ENCODE measurements at regions of chr1 and their contacts with region 1.

Region 1: DNA sequence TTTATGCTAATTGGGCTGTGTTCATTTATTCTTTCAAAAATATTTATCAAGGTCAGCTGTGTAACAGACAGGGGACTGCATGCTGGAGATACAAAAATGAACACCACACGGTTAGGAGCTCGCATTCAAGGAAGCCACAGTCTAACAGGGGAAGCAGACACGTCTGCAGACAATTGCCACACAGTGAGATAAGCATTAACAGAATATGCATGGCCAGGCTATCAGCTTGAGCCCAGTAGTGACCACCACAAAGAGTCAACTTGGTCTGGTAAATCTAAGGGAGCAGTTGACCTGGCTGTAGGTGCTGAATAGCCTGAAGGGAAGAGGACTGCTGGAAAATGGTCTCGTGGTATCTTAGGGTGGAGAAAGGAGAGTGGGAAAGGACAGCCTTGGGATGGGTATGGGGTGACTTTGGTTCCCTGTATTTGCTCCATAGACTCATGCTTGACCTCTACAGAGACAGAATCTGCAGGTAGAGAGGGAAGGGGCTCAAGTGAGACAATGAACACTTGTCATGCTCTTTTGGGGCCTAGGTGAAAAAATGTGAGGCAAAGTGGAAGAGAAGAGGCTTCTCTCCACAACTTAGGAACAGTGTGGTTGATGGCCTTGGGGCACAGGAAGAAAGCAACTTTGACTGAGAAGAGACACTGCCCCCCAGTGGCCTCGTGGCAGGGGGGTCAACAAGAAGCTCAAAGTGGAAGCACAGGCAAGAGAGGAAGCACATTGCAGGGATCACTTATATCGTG is 7.6 kb upstream of the NPL start:
- DNase-seq: peak; percentile 45 to 82 (median 62)
- ATAC-seq: peak; percentile 83
- H3K4me3 ChIP-seq: no peak overlapping the region
- H3K4me3 Mint-ChIP-seq: no peak overlapping the region
- H3K27ac ChIP-seq: no peak overlapping the region
- H3K27ac Mint-ChIP-seq: no peak overlapping the region
- H3K4me1 ChIP-seq: peaks cover 5% of the 10 kb centered on the region
- H3K4me1 Mint-ChIP-seq: peaks cover 4% of the 10 kb centered on the region
- H3K27me3 ChIP-seq: peaks cover 0 to 2% of the 10 kb centered on the region in 2 experiments
- H3K27me3 Mint-ChIP-seq: no peaks in the 10 kb centered on the region
- CTCF ChIP-seq: peak; percentile 58

Region 2: GRCh38 chr1:182446033-182446669 is 335.9 kb before region 1 on chr1:
- CTCF ChIA-PET with region 1: no interaction called
- POLR2A ChIA-PET with region 1: no interaction called
- intact Hi-C with region 1: loop called (anchors 2 kb)
- DNase-seq: peak in 4 of 14 experiments; percentile 30 to 62 (median 43)
- ATAC-seq: no peak
- H3K4me3 ChIP-seq: no peak overlapping the region
- H3K4me3 Mint-ChIP-seq: no peak overlapping the region
- H3K27ac ChIP-seq: no peak overlapping the region
- H3K27ac Mint-ChIP-seq: no peak overlapping the region
- H3K4me1 ChIP-seq: no peaks in the 10 kb centered on the region
- H3K4me1 Mint-ChIP-seq: no peaks in the 10 kb centered on the region
- H3K27me3 ChIP-seq: no peaks in the 10 kb centered on the region
- H3K27me3 Mint-ChIP-seq: peaks cover 10% of the 10 kb centered on the region
- CTCF ChIP-seq: peak; percentile 65

Region 3: GRCh38 chr1:182588500-182589452 is 193.2 kb before region 1 on chr1 and contains the start of gene RNASEL:
- CTCF ChIA-PET with region 1: interaction called, 370 read pairs
- POLR2A ChIA-PET with region 1: interaction called, 4 read pairs
- intact Hi-C with region 1: no loop called
- DNase-seq: peak; percentile 28 to 85 (median 54)
- ATAC-seq: peak; percentile 85
- H3K4me3 ChIP-seq: peak within 1 kb of the TSS; percentile 83
- H3K4me3 Mint-ChIP-seq: peak within 1 kb of the TSS; percentile 95
- H3K27ac ChIP-seq: peak within 1 kb of the TSS; percentile 89 to 97
- H3K27ac Mint-ChIP-seq: peak within 1 kb of the TSS; percentile 99
- H3K4me1 ChIP-seq: peaks cover 28% of the 10 kb centered on the region
- H3K4me1 Mint-ChIP-seq: peaks cover 52% of the 10 kb centered on the region
- H3K27me3 ChIP-seq: no peaks in the 10 kb centered on the region
- H3K27me3 Mint-ChIP-seq: no peaks in the 10 kb centered on the region
- CTCF ChIP-seq: no peak
- total RNA-seq, gene RNASEL: 3.5 to 3.7 TPM

Region 4: DNA sequence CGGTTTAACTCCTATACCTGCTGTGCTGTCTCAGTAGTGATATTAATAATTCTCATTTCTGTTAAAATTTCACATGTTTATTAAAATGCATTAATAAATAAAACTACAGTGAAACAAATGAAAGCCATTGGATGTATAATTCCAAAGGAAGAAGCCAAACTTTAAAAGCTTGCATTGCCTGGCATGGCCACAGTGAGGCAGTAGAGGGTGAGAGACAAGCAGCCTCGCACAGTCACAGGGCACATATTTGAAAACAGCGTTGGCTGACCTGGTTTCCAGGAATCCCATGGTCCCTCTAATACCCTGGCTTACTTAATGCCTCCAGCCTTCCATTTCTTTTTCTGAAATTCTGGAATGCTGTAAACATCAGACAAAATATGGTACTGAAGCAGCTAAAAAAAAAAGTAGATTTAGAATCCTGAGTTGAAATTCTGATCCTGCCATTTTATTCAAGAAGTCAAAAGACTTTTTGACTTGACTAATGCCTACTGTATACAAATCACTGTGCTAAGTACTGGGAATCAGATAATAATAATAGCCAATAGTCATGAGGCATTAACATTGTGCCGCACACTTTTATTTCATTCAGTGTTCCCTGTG is 186.3 kb before region 1 on chr1:
- CTCF ChIA-PET with region 1: interaction called, 370 read pairs
- POLR2A ChIA-PET with region 1: interaction called, 8 read pairs
- intact Hi-C with region 1: loop called (anchors 1 kb)
- DNase-seq: peak; percentile 37 to 78 (median 57)
- ATAC-seq: peak; percentile 90
- H3K4me3 ChIP-seq: no peak overlapping the region
- H3K4me3 Mint-ChIP-seq: no peak overlapping the region
- H3K27ac ChIP-seq: no peak overlapping the region
- H3K27ac Mint-ChIP-seq: no peak overlapping the region
- H3K4me1 ChIP-seq: peaks cover 1% of the 10 kb centered on the region
- H3K4me1 Mint-ChIP-seq: peaks cover 4% of the 10 kb centered on the region
- H3K27me3 ChIP-seq: no peaks in the 10 kb centered on the region
- H3K27me3 Mint-ChIP-seq: no peaks in the 10 kb centered on the region
- CTCF ChIP-seq: peak; percentile 88

Region 5: GRCh38 chr1:182614796-182615454 is 167.1 kb before region 1 on chr1:
- CTCF ChIA-PET with region 1: interaction called, 14 read pairs
- POLR2A ChIA-PET with region 1: no interaction called
- intact Hi-C with region 1: no loop called
- DNase-seq: peak in 11 of 14 experiments; percentile 17 to 78 (median 43)
- ATAC-seq: no peak
- H3K4me3 ChIP-seq: peak overlapping the region; percentile 57
- H3K4me3 Mint-ChIP-seq: peak overlapping the region; percentile 84
- H3K27ac ChIP-seq: no peak overlapping the region
- H3K27ac Mint-ChIP-seq: peak overlapping the region; percentile 82
- H3K4me1 ChIP-seq: peaks cover 36% of the 10 kb centered on the region
- H3K4me1 Mint-ChIP-seq: peaks cover 32% of the 10 kb centered on the region
- H3K27me3 ChIP-seq: peaks cover 14 to 23% of the 10 kb centered on the region in 2 experiments
- H3K27me3 Mint-ChIP-seq: peaks cover 49% of the 10 kb centered on the region
- CTCF ChIP-seq: no peak

Measured in CD4-positive, alpha-beta T cell (primary cell).